HEK293 (cell line): ENCODE measurements at regions of chr1 and their contacts with region 1.

Region 1: DNA sequence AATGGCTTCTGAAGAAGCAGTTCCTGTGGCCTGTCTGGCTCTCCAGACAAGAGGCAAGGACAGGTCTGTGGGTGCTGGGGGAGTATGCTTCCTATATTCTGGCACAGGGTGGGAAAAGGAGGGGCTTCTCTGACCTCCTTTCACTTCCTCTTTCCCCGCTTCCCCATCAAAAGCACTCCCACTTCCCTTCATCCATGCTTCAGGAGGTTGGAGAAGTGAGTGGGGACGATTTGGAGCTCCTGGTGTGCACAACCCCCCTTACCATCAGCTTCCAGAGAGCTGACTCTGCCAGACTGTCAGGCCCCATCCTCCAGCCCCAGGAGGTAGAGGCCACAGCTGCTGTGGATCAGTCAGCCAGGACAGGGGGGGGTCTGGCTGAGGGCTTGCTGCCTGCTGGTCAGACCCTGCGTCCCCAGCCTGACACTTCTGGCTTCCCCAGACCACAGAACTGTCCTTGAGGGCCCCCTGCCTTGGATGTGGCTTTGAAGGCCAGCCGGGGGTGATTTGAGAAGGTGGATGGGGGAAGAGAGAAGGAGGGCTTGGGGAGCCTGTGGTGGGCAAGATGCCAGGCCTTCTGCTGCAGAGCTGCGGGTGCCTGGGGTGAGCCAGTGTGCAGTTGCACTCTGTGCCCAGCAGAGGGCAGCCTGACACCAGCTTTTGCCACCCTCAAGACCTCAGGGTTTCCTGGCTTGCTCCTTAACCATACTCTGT is 21.5 kb upstream of the TMEM222 start:
- H3K4me3 ChIP-seq: no peak overlapping the region
- H3K27ac ChIP-seq: no peak overlapping the region
- H3K4me1 ChIP-seq: no peaks in the 10 kb centered on the region
- CTCF ChIP-seq: peak; percentile 92

Region 2: DNA sequence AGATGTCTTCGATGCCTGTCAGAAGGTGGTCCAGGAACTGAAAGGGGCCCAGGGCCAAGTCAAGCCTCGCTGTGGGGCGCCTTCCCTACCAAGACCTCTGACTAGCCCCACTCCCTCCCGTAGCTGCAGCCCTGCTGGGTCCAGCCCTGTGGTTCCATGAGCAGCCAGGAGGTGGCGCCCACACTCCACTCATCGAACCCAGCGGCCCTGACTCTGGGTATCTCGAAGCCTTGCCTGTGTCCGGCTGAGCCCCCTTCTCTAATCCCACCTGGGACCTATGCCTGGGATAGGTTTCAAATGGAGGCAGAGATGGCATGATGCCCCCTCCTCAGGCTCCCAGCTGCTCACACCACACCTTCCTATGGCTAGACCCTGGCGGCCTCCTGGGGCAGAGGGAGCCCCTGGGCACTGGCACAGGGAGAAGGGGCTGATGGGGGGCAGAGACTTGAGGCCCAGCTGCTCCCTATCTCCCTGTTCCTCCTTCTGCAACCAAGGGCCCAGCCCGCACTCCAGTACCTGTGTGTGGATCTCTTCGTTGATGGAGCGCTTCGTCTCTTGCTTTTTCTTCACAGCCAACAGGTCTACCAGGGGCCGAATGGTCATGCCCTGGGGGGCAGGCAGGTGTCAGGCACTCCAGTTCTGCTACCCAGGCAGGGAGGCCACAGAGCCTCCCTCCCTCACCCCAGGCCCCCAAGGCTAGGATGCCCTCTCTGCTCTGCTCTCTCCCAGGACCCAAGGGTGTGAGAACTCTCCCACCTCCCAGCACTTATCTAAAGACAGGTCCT is 197.6 kb before region 1 on chr1:
- CTCF ChIA-PET with region 1: interaction called, 20 read pairs
- POLR2A ChIA-PET with region 1: interaction called, 5 read pairs
- H3K4me3 ChIP-seq: no peak overlapping the region
- H3K27ac ChIP-seq: no peak overlapping the region
- H3K4me1 ChIP-seq: peaks cover 8% of the 10 kb centered on the region
- CTCF ChIP-seq: peak; percentile 94

Region 3: DNA sequence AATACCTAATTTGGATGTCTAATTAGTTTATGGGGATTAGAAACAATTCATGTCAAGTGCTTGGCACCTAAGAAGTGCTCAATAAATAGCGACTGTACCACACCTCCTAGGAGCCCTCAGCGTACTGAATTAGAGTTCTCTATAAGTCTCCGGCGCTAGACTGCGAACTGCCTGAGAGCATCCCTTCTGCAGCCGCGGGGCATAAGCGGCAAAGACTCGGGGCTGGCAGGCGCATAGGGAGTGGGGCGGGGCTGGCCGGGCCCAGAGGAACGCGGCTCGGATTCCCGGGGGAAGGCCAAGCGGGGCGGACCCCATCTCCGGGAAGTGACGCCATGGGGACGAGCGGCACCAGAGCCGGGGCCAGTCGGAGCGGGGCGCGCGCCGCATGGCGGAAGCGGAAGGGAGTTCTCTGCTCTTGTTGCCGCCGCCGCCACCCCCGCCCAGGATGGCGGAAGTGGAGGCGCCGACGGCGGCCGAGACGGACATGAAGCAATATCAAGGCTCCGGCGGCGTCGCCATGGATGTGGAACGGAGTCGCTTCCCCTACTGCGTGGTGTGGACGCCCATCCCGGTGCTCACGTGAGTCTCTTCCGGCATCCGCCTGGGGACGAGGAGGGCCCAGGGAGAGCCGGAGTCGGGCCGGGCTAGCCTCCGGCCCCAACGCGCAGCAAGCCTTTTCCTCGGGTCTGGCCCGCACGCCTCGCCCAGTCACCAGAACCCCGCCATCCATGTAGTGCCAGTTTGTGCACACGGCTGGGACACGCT is 21.5 kb after region 1 on chr1 and contains the start of gene TMEM222:
- CTCF ChIA-PET with region 1: interaction called, 19 read pairs
- POLR2A ChIA-PET with region 1: no interaction called
- H3K4me3 ChIP-seq: peak within 1 kb of the TSS; percentile 88
- H3K27ac ChIP-seq: peak within 1 kb of the TSS; percentile 81
- H3K4me1 ChIP-seq: no peaks in the 10 kb centered on the region
- CTCF ChIP-seq: peak; percentile 61

Region 4: DNA sequence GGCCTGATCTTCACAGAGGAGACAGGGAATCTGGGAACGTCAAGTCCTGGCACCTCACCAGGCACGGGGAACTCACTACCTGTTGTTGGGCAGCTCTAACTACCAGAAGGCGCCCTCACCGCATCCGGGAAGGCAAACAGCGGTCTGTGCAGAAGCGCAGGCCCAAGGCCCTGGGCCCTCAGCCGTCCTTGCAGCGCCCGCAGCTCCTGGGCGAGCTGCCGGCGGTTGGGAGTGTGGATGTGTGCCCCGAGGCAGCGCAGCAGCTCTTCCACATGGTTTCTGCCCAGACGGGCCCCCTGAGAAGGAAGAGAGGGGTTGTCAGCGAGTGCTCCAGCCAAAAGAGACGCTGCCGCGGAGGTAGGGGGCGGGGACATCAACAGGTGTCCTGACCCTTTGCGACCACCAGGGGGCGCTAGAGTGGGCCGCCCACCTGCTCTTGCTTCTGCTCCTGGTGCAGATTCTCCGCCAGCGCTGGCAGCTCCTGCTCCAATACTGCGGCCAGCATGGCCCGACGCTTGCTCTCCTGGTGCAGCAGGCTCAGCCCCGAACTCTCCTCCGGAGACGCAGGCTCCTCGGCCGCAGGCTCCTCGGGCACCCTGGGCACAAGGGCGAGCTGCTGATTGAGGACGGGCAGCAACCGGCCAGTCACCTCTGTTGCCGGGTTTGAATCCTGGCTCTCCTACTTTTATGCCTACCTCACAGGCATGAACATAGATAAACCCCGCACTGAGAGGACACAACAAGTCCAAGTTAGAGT is 57.0 kb after region 1 on chr1:
- CTCF ChIA-PET with region 1: interaction called, 15 read pairs
- POLR2A ChIA-PET with region 1: no interaction called
- H3K4me3 ChIP-seq: no peak overlapping the region
- H3K27ac ChIP-seq: no peak overlapping the region
- H3K4me1 ChIP-seq: no peaks in the 10 kb centered on the region
- CTCF ChIP-seq: peak; percentile 94

Region 5: GRCh38 chr1:27392096-27392777 is 91.7 kb after region 1 on chr1 and contains the start of gene GPR3:
- CTCF ChIA-PET with region 1: interaction called, 202 read pairs
- POLR2A ChIA-PET with region 1: no interaction called
- H3K4me3 ChIP-seq: peak within 1 kb of the TSS; percentile 45
- H3K27ac ChIP-seq: no peak within 1 kb of the TSS
- H3K4me1 ChIP-seq: no peaks in the 10 kb centered on the region
- CTCF ChIP-seq: peak; percentile 83